Common myeloid progenitor, CD34-positive (primary cell): ENCODE measurements at regions of chr17 and their contacts with region 1.

Region 1: GRCh38 chr17:58317421-58318064 is 11.1 kb downstream of the TSPOAP1 start:
- DNase-seq: peak; percentile 80 to 91 (median 88)
- H3K4me3 ChIP-seq: no peak overlapping the region
- H3K27ac ChIP-seq: no peak overlapping the region
- H3K4me1 ChIP-seq: peaks cover 5 to 38% (median 18%) of the 10 kb centered on the region in 4 experiments
- H3K27me3 ChIP-seq: no peaks in the 10 kb centered on the region

Region 2: DNA sequence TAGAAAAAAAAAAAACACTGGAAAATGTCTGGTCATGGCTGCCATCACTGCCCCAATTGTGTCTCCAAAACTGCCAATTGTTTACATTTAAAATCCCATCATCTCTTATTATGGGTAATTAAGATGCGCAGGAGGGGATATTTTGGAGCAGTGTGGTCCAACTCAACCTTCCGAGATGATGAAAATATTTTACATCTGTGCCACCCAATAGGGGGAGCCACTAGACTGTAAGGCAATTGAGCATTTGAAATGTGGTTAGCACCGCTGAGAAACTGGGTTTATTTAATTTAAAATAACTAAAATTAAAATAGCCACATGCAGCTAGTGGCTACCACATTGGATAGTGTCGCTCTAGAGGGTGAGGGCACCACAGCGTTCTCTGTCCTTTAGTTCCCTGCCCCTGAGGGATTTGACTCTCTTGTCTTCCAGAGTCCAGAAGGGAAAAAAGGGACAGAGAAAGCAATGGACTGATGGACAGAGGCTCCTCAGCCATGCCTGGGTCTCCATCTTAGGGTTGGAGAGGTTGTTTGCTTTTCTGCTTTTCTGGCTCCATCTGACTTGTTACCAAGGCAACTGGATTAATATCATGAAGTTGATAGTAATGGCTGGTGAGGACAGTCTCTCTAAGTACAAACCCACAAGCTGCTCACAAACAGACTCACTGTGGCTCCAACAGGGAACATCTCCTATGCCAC is 40.3 kb before region 1 on chr17:
- CTCF ChIA-PET with region 1: interaction called, 16 read pairs
- POLR2A ChIA-PET with region 1: no interaction called
- DNase-seq: peak; percentile 34 to 77 (median 72)
- H3K4me3 ChIP-seq: peak overlapping the region in 1 of 7 experiments; percentile 64
- H3K27ac ChIP-seq: no peak overlapping the region
- H3K4me1 ChIP-seq: peaks cover 0 to 64% (median 37%) of the 10 kb centered on the region in 4 experiments
- H3K27me3 ChIP-seq: no peaks in the 10 kb centered on the region

Region 3: GRCh38 chr17:58329035-58329809 is 11.7 kb after region 1 on chr17:
- CTCF ChIA-PET with region 1: interaction called, 43 read pairs
- POLR2A ChIA-PET with region 1: interaction called, 15 read pairs
- DNase-seq: peak; percentile 85 to 92 (median 92)
- H3K4me3 ChIP-seq: peak overlapping the region in 6 of 7 experiments; percentile 78 to 100 (median 99)
- H3K27ac ChIP-seq: peak overlapping the region; percentile 56 to 99
- H3K4me1 ChIP-seq: peaks cover 16 to 80% (median 73%) of the 10 kb centered on the region in 4 experiments
- H3K27me3 ChIP-seq: peaks cover 0 to 6% (median 0%) of the 10 kb centered on the region in 5 experiments

Region 4: DNA sequence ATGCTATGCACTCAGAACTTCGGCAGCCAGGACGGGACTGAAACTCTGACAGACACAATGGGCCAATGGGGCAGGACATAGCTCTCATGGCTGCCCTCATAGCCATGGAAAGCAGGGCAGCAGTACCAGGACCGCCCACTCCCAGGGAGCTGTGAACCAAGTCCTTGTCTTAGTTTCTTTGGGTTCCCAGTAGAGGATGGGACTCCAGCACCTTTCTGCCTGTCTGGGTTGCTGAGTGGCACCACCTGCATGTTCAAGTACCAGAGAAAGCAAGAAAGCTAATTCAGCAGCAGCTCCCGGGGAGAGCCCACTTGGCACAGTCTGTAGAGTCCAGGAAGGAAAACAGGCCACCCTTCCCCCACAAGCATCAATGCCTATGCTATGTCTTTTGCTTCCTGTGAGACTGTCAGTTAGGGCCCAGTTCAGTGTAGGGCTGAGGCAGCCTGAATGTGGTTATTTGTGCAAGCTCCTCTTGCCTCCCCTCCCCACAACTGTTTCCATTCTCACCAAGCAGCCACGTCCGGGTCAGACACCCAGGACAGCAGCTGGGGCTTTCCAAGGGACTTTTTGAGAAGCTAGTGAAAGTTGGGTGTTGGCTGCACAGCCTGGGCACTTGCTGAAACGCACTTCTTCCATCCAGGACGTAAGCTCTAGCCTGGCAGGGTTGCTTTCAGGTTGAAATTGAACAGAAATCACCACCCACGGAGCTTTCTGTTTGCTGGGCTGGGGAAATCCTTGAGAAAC is 26.7 kb after region 1 on chr17:
- CTCF ChIA-PET with region 1: interaction called, 60 read pairs
- POLR2A ChIA-PET with region 1: interaction called, 6 read pairs
- DNase-seq: peak; percentile 63 to 96 (median 96)
- H3K4me3 ChIP-seq: peak overlapping the region in 6 of 7 experiments; percentile 26 to 63 (median 51)
- H3K27ac ChIP-seq: peak overlapping the region; percentile 52 to 87
- H3K4me1 ChIP-seq: peaks cover 29 to 69% (median 58%) of the 10 kb centered on the region in 4 experiments
- H3K27me3 ChIP-seq: no peaks in the 10 kb centered on the region

Region 5: GRCh38 chr17:58378733-58379510 is 61.4 kb after region 1 on chr17:
- CTCF ChIA-PET with region 1: interaction called, 14 read pairs
- POLR2A ChIA-PET with region 1: no interaction called
- DNase-seq: no peak
- H3K4me3 ChIP-seq: peak overlapping the region in 1 of 7 experiments; percentile 38
- H3K27ac ChIP-seq: no peak overlapping the region
- H3K4me1 ChIP-seq: peaks cover 8 to 33% (median 18%) of the 10 kb centered on the region in 4 experiments
- H3K27me3 ChIP-seq: no peaks in the 10 kb centered on the region

Region 6: DNA sequence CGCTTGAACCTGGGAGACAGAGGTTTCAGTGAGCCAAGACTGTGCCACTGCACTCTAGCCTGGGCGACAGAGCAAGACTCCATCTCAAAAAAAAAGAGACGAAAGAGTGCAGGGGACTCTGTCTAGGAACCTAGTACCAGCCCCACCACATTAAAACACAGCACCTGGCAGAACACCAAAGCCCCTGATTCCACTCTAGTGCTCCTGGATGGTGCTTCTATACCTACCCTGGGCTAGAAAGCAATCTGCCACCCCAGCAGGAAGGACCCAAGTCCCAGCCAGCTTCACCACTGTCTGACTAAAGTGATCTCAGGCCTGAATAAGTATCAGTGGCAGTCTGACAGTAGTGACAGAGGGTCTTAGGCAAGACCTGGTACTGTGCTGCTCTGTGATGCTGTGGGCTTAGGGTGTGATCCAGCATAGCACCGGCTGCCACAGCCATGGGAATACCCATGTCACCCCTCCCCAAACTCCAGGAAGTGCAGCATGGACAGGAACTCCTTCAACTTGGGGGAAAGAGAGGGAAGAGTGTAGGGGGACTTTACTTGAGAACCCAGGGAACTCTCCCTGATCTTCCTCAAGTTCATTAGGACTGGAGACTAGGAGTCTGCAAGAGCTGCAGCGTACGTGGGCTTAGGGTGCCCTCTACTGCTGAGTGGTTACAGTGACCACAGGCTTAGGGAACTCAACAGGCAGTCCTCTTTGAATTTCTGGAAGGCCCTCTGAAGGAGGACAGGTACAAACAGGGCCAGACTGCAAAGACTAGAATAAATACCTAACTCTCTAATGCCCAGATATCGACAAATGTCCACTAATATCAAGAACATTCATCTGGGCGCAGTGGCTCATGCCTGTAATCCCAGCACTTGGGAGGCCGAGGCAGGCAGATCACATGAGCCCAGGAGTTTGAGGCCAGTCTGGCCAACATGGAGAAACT is 129.8 kb after region 1 on chr17:
- CTCF ChIA-PET with region 1: interaction called, 20 read pairs
- POLR2A ChIA-PET with region 1: interaction called, 7 read pairs
- DNase-seq: peak; percentile 85 to 87 (median 86)
- H3K4me3 ChIP-seq: no peak overlapping the region
- H3K27ac ChIP-seq: no peak overlapping the region
- H3K4me1 ChIP-seq: no peaks in the 10 kb centered on the region
- H3K27me3 ChIP-seq: no peaks in the 10 kb centered on the region